ENCODE measurements at regions of chr10 and their contacts with region 1.

Region 1: DNA sequence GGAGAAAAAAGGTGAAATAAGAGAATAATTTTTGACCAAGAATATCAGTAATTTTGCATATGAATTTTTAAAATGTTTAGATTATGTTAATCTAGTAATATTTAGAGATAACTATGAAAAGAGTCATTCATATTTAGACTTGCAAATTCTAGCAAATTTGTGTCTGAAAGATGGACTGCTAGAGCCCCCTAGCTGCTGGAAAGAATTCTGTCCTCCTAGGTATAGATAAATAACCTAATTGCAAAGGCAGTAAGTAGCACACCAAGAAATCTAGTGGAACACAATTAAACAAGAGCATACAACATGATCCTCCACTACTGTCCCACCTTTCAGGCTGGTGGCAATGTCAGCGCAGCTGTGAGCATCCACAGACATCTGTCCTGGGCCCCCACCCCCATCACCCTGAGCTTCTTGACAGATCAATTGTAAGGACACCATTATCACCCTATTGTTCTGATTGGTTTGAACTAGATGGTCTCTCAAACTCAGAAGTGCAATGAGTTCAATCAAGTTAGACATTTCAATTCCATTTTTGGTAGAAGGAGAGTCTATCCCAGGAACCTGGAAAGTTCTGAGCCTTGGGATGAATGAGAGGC is 15.0 kb upstream of the GFRA1 start:
- DNase-seq: no peak
- H3K4me3 ChIP-seq: no peak overlapping the region
- H3K27ac ChIP-seq: no peak overlapping the region
- H3K4me1 ChIP-seq: no peaks in the 10 kb centered on the region
- H3K27me3 ChIP-seq: no peaks in the 10 kb centered on the region
- CTCF ChIP-seq: peak; percentile 40 to 82 (median 73)
- POLR2A ChIP-seq: no peak

Region 2: DNA sequence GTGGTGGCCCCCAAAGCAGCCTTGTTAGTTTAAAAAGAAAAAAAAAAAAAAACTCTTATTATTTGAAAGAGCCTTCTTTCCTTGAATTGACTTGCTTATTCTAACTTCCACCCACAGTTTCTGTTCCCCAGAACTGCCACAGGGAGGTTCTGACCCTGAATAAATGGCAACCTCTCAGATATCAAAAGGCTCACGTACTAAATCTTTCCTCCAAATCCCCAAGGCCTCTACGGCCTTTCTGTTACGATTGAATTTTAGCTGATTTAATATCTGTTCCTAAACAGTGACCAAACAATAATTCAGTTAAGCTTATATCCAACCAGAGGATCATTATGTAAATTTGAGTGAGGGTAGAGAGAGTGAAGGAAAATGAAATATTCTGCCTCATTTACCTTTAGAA is 497.8 kb before region 1 on chr10:
- intact Hi-C with region 1: loop called (anchors 10 kb)
- DNase-seq: no peak
- H3K4me3 ChIP-seq: no peak overlapping the region
- H3K27ac ChIP-seq: no peak overlapping the region
- H3K4me1 ChIP-seq: no peaks in the 10 kb centered on the region
- H3K27me3 ChIP-seq: no peaks in the 10 kb centered on the region
- CTCF ChIP-seq: no peak
- POLR2A ChIP-seq: no peak